Endothelial cell of umbilical vein (primary cell): ENCODE measurements at regions of chr1 and their contacts with region 1.

Region 1: DNA sequence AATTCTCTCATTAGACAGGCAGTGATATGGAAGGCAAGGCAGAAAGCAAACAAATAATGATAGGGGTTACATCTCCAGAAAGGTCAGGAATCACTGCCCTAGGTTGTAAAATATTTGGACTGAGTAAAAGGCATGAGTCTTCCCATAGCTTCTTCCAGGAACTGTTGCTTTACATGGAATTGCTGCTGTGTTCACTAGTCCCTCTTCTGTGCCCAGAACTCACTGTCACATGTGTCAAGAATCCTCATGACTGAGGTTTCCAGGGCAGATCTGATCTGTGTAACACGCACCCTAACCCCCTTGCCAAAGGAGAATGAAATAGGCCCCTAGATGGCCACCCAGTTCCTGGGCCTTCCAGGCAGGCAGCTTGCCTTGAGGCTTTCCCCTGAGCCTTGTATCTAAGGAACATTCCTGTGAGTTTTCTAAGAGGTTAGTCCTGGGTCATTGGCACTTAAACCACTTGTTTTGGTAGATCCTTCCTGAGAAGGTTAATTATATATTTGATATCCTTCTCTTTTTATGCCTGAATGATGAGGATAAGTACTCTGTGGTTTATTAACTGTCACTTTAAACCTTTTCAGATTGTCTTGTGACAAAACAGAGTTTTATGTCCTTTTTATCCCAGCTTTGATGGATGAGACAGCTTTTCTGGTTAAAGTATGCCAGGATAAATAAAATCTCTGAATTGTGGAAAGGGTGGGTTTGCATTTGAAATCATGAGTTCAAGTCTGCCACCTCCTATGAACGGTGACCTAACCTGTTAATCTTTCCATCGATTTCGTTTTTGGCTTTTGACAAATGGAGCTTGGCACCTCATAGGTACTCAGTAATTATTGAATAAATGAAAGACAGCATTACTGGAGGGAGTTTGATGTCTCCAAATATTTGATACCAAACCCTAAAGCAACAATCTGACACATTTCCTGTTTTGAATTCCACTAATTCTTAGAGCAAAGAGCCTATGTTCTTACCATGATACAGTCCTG is 163.3 kb downstream of the DHRS3 start:
- DNase-seq: peak; percentile 81
- H3K4me3 ChIP-seq: peak overlapping the region in 1 of 3 experiments; percentile 6
- H3K27ac ChIP-seq: peak overlapping the region; percentile 88
- H3K4me1 ChIP-seq: peaks cover 62% of the 10 kb centered on the region
- H3K27me3 ChIP-seq: no peaks in the 10 kb centered on the region
- CTCF ChIP-seq: no peak
- POLR2A ChIP-seq: no peak

Region 2: DNA sequence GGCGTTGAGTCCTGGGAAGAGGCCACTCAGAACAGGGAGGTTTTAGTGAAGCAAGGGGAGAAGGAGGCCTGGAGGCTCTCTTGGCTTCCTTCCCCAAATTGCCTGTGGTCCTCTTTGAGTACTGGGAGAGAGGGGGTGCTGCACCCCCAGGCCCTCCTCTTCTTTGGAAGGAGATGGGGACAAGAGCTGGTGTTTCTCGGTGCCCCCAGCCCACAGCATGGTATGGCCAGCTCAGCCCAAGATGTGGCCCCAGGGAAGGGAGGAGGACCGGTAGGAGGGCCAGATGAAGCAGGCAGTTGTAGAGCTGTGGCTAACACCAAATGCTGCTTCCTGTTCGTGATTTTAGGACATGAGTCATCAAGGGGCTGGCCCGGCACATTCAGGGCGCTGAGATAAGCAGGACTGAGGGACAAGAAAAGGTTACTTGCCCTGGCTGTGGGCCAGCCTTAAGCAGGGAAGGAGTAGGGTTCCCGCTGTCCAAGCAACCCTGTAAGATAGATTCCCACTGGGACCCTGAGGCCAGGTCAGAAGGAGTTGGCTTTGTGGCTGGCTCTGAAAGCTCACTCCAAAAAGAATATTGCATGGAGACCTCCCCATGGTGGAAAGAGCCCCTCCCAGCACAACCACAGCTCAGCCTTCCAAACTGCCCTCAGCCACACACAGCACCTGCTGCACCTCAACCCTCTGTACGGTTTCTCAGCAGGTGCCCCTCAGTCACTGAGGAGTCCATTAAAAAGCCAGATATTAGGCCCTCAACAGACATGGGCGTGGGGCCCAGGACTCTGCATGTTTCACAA is 292.8 kb before region 1 on chr1:
- CTCF ChIA-PET with region 1: no interaction called
- POLR2A ChIA-PET with region 1: no interaction called
- dilution Hi-C with region 1: no loop called
- intact Hi-C with region 1: no loop called
- DNase-seq: peak; percentile 96
- H3K4me3 ChIP-seq: no peak overlapping the region
- H3K27ac ChIP-seq: peak overlapping the region; percentile 59
- H3K4me1 ChIP-seq: peaks cover 23% of the 10 kb centered on the region
- H3K27me3 ChIP-seq: no peaks in the 10 kb centered on the region
- CTCF ChIP-seq: no peak
- POLR2A ChIP-seq: no peak

Region 3: GRCh38 chr1:12511516-12512468 is 57.1 kb after region 1 on chr1:
- CTCF ChIA-PET with region 1: no interaction called
- POLR2A ChIA-PET with region 1: no interaction called
- dilution Hi-C with region 1: no loop called
- intact Hi-C with region 1: loop called (anchors 2 kb)
- DNase-seq: peak; percentile 13
- H3K4me3 ChIP-seq: no peak overlapping the region
- H3K27ac ChIP-seq: no peak overlapping the region
- H3K4me1 ChIP-seq: peaks cover 11% of the 10 kb centered on the region
- H3K27me3 ChIP-seq: no peaks in the 10 kb centered on the region
- CTCF ChIP-seq: no peak
- POLR2A ChIP-seq: no peak

Region 4: DNA sequence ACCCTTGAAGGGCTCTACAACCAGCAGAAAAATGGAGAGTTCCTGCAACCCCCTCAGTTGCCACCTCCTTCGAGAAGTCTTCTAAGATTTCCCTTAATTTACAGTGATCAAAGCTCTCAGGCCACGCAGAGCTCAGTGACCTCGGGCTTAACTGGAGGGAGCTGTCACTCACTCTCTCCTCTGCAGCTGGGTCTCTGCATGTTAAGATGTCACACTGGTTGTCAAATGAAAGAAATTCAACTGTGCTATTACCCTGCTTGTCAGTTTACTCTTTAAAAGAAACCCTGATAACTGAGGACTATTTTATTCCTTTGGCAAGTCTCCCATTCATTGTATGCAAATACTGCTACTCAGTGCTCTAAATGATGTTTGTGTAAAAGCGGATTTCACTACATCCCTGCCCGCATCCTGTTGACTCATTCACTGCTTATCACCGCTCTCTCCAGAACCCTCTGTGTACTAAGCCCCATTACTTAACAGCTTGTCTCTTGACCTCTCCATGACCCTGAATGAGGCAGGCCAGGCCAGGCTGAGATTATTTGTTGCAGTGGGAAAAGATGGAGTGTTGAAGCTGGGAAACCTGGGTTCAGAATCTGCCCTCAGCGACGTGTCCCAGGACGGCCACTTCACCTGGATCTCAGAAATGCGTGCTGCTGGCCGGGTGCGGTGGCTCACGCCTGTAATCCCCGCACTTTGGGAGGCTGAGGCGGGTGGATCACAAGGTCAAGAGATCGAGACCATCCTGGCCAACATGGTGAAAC is 149.6 kb after region 1 on chr1:
- CTCF ChIA-PET with region 1: no interaction called
- POLR2A ChIA-PET with region 1: no interaction called
- dilution Hi-C with region 1: no loop called
- intact Hi-C with region 1: loop called (anchors 1 kb)
- DNase-seq: peak; percentile 99
- H3K4me3 ChIP-seq: peak overlapping the region in 1 of 3 experiments; percentile 15
- H3K27ac ChIP-seq: peak overlapping the region; percentile 95
- H3K4me1 ChIP-seq: peaks cover 38% of the 10 kb centered on the region
- H3K27me3 ChIP-seq: no peaks in the 10 kb centered on the region
- CTCF ChIP-seq: no peak
- POLR2A ChIP-seq: peak; percentile 38